ENCODE measurements at regions of chr11 and their contacts with region 1.

Region 1: GRCh38 chr11:33089776-33090175 is 50.4 kb downstream of the TCP11L1 start:
- DNase-seq: no peak
- H3K4me3 ChIP-seq: no peak overlapping the region
- CTCF ChIP-seq: no peak
- POLR2A ChIP-seq: no peak

Region 2: DNA sequence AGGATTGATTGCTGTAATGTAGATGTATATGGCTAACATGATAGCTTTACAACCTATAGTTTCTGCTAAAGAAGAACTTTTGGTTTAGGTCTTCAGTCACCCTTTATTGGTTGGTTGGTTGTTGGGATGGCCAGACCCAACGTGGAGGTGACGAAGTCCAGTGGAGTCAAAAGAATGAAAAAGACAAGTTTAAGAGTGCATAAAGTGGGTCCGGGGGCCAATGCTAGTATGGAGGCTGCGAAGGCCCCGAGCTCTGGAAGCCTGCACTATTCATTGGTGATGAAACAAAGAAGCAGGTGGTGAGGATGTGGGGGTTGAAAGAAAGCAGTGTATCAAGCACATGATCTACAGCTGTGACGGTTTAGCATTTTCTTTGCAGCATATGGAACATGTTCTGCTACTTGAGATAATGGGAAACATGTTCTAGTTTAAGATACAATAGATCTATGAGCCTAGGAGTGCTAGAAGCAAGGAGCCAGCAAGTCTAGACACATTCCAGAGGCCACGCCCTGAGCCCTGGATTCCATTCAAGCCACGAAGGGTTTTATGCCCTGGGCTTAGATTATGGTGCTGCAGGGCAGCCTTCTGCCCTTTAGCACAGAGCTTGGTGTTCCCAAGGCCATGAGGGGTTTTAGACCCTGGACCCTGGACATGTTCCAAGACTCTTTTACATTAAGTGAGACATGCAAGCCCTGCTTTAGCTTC is 44.1 kb before region 1 on chr11:
- intact Hi-C with region 1: no loop called
- DNase-seq: no peak
- H3K4me3 ChIP-seq: no peak overlapping the region
- CTCF ChIP-seq: no peak
- POLR2A ChIP-seq: no peak

Region 3: GRCh38 chr11:33134276-33134675 is 44.5 kb after region 1 on chr11:
- intact Hi-C with region 1: loop called (anchors 1 kb)
- DNase-seq: no peak
- H3K4me3 ChIP-seq: no peak overlapping the region
- CTCF ChIP-seq: no peak
- POLR2A ChIP-seq: no peak

Measured in lower leg skin (tissue), 4 donors.